ENCODE measurements at regions of chr10 and their contacts with region 1.

Region 1: DNA sequence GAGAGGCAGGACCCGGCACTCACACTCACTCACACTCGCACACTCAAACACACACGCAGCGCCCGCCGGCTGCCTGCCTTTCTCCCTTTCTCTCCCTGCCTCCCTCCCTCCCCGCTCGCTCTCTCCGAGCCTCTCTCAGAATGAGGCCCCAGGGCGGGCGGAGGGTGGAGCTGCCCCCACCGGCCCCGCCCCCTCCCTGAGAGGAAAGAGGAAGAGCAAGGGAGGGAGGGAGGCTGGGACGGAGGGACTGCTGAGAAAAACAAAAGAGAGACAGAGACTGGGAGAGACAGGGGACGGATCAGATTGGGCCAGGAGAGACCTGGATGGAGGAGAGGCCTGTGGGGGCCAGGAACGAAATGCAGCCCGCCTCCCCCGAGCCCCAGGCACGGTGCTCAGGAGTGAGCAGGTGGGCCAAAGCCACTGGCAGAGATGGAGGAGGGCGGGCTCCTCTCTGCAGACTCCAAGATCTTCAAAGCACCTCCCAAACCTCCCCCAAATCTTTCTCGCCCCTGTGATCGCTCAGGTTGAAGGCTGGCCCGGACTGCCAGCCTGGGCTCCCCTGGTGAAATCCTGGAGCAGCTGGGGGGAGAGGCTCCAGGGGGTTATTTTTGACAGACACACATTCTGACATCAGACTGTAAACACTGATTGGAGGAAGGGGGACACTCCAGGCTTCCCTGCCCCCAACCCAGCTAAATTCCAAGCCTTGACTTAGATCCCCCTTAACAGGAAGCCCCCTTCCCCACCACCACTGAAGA is 5.1 kb downstream of the LDB1 start:
- DNase-seq: peak; percentile 89 to 92
- ATAC-seq: peak; percentile 73 to 87 (median 80)
- H3K4me3 ChIP-seq: peak overlapping the region; percentile 54 to 99 (median 78)
- H3K27ac ChIP-seq: peak overlapping the region; percentile 21 to 100 (median 95)
- H3K4me1 ChIP-seq: peaks cover 23 to 78% (median 69%) of the 10 kb centered on the region in 9 donors
- H3K27me3 ChIP-seq: no peaks in the 10 kb centered on the region
- CTCF ChIP-seq: no peak

Region 2: GRCh38 chr10:101782811-101783735 is 332.0 kb before region 1 on chr10 and contains the start of gene NPM3:
- intact Hi-C with region 1: no loop called
- DNase-seq: peak; percentile 78 to 85
- ATAC-seq: peak; percentile 65 to 79 (median 74)
- H3K4me3 ChIP-seq: peak within 1 kb of the TSS; percentile 19 to 82 (median 71)
- H3K27ac ChIP-seq: peak within 1 kb of the TSS in 8 of 10 donors; percentile 35 to 75 (median 50)
- H3K4me1 ChIP-seq: peaks cover 11 to 66% (median 44%) of the 10 kb centered on the region in 9 donors
- H3K27me3 ChIP-seq: peaks cover 0 to 23% (median 9%) of the 10 kb centered on the region in 7 donors
- CTCF ChIP-seq: no peak
- total RNA-seq, gene NPM3: 4.9 to 12.1 (median 7.0) TPM

Region 3: GRCh38 chr10:102055647-102056419 is 59.2 kb before region 1 on chr10 and contains the start of gene ARMH3:
- intact Hi-C with region 1: loop called in 1 of 10 experiments (anchors 5 kb)
- DNase-seq: peak; percentile 90 to 96
- ATAC-seq: peak; percentile 96 to 99 (median 98)
- H3K4me3 ChIP-seq: peak within 1 kb of the TSS; percentile 77 to 96 (median 87)
- H3K27ac ChIP-seq: peak within 1 kb of the TSS; percentile 85 to 98 (median 95)
- H3K4me1 ChIP-seq: peaks cover 0 to 43% (median 32%) of the 10 kb centered on the region in 9 donors
- H3K27me3 ChIP-seq: no peaks in the 10 kb centered on the region
- CTCF ChIP-seq: no peak
- total RNA-seq, gene ARMH3: 45.0 to 96.8 (median 59.5) TPM

Region 4: DNA sequence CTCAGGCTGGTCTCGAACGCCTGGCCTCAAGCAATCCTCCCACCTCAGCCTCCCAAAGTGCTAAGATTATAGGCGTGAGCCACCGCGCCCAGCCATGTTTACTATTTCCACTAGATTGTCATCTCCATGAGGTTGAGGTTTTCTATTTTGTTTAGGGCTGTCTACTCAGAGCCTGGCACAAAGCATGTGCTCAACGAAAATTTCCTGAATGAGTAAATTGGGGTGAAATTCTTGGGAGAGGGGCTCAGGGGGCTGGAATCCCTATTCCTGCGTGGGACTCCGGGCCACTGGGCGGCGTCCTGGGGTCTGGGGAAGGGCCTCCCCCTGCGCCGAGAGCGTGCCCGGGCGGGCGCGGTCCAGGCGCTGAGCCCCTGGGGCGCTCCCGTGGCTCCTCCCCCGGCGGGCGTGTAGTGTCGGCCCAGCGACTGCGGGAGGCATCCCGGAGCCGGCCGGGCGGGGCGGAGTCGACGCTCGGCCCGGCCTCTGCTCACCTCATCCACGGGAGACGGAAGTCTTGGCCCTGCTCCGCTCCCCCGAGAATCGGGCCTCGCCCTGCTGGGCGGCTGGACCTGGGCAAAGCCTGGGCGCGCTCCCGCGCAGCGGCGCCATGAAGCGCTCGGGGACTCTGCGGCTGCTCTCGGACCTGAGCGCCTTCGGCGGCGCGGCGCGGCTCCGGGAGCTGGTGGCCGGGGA is 50.0 kb before region 1 on chr10 and contains the start of gene HPS6:
- intact Hi-C with region 1: loop called in 3 of 10 experiments (anchors 5 kb)
- DNase-seq: peak; percentile 90 to 93
- ATAC-seq: peak; percentile 97 to 98 (median 98)
- H3K4me3 ChIP-seq: peak within 1 kb of the TSS; percentile 49 to 96 (median 85)
- H3K27ac ChIP-seq: peak within 1 kb of the TSS; percentile 25 to 97 (median 93)
- H3K4me1 ChIP-seq: peaks cover 10 to 45% (median 33%) of the 10 kb centered on the region in 9 donors
- H3K27me3 ChIP-seq: no peaks in the 10 kb centered on the region
- CTCF ChIP-seq: peak in 7 of 9 donors; percentile 7 to 47 (median 28)
- total RNA-seq, gene HPS6: 8.2 to 13.6 (median 11.1) TPM

Measured in heart right ventricle (tissue), 16 donors.